Activated B cell treated with CpG ODN at 0.5 μM for 24 hours (primary cell): ENCODE measurements at regions of chr12 and their contacts with region 1.

Region 1: DNA sequence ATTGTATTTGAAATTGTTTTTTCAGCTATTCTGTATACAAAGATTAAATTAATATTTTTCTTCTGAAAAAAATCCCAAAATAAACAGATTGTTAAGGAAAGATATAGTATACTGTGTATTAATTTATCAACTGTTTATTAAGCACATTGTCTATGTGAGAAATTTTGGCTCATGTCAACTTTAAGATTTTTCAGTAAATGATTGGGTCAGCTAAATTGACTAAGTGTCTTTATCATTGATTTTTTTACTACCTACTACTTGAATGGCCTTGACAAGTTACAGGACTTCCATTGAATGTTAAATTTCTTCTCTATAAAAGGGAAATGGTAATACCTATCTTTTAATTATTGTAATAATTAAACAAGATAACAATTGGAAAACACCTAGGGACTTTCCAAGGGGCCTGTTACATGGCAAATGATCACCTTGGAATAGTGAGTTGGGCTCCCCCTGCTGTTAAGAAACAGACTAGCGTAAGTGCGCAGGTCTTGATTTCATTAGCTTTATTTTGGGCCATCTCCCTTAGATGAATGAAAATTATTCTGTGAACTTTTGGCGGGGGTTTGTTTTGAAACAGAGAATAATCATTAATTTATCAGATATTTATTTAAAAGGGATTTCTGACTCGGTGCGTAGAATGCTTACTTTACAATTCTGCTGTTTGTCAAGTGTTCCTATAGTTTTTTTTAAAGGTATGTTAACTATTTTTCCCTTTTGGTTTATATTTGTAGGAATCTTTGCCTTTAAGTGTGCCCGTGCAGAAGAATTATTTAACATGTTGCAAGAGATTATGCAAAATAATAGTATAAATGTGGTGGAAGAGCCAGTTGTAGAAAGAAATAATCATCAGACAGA is 14.5 kb upstream of the CCT2 start:
- DNase-seq: no peak
- ATAC-seq: peak; percentile 82
- H3K4me3 Mint-ChIP-seq: no peak overlapping the region
- H3K27ac Mint-ChIP-seq: no peak overlapping the region
- H3K4me1 Mint-ChIP-seq: no peaks in the 10 kb centered on the region
- H3K27me3 Mint-ChIP-seq: no peaks in the 10 kb centered on the region
- CTCF ChIP-seq: peak; percentile 88

Region 2: DNA sequence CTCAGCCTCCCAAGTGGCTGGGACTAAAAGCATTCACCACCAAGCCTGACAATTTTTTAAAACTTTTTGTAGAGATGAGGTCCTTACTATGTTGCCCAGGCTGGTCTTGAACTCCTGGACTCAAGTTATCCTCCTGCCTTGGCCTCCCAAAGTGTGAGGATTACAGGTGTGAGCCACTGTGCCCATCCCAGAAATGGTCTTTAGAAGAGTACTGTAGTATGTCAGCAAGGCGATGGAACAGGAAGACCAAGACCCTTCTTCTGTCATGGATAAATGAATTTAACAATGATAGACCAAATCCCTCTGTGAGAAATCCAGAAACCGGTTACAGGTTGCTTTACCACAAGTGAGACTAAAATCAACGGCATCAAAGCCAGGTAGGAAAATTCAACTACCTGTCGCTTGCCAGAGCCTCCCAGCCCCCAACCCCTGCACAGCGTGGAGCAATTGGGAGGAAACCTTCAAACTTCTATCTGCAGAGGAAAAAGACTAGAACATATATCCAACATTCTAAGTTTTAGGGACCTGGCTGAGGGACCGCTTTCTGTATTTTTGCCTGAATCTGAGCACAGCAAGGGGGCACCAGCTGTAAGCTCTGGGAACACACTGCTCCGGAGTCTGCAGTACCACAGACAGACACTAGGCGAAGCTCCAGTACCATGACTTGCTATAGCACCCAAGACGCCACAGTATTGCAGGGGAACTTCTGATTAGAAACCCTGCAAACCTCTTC is 280.1 kb before region 1 on chr12:
- CTCF ChIA-PET with region 1: interaction called, 34 read pairs
- POLR2A ChIA-PET with region 1: interaction called, 3 read pairs
- intact Hi-C with region 1: loop called (anchors 1 kb)
- DNase-seq: peak; percentile 56
- ATAC-seq: peak; percentile 100
- H3K4me3 Mint-ChIP-seq: no peak overlapping the region
- H3K27ac Mint-ChIP-seq: no peak overlapping the region
- H3K4me1 Mint-ChIP-seq: peaks cover 2% of the 10 kb centered on the region
- H3K27me3 Mint-ChIP-seq: peaks cover 45% of the 10 kb centered on the region
- CTCF ChIP-seq: peak; percentile 99

Region 3: DNA sequence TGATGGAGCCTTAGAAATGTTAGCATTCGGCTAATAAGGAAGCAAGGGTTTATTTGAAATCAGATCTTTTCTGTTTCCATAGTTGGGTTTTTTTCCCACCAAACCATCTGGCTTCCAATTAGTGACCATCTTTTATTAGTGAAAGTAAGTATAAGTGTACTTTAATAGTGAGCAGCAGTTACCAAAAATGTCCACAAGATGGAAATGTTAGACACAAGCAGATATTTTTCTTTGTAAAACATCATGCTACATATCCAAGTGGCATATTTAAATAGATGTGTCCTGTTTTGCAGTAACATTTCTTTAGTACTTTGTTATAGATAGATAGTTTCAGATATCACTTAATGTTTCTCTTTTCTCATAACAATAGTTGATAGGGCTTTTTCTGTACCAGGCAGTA is 182.4 kb before region 1 on chr12:
- CTCF ChIA-PET with region 1: interaction called, 31 read pairs
- POLR2A ChIA-PET with region 1: no interaction called
- intact Hi-C with region 1: loop called (anchors 1 kb)
- DNase-seq: no peak
- ATAC-seq: no peak
- H3K4me3 Mint-ChIP-seq: no peak overlapping the region
- H3K27ac Mint-ChIP-seq: no peak overlapping the region
- H3K4me1 Mint-ChIP-seq: no peaks in the 10 kb centered on the region
- H3K27me3 Mint-ChIP-seq: no peaks in the 10 kb centered on the region
- CTCF ChIP-seq: no peak

Region 4: DNA sequence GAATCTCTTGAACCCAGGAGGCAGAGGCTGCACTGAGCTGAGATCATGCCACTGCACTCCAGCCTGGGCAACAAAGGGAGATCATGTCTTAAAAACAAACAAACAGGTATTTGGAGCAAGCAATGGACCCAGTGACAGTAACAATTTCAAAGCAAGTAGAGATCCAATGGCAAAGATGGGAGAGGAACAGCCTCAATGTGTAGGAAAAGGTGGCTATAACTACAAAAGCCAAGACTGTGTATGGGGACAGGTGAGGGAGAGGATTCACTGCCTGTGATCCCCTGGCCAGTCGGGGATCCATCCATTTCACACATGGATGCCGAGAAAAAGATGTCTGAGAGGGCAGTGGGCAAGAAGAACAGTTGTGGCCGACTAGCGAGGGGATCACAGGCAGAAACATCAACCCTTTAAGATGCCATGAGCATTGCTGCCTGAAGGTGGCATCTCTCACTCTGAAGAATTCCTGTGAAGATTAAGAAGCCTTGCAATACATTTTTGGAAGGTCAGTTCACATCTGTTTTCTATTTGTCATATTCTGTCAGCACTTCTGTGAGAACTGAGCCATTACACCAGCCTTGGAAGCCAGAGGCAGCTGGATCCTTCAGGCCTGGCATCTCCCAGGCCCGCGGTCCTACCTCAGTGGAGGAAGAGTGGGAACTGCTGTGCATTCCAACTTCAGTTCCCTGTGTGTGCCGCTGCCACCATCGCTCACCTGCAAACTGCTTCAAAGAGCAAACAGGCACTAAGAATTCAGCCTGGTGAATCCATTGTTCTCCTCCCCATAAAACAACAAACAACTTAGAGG is 155.1 kb before region 1 on chr12:
- CTCF ChIA-PET with region 1: interaction called, 9 read pairs
- POLR2A ChIA-PET with region 1: no interaction called
- intact Hi-C with region 1: loop called (anchors 1 kb)
- DNase-seq: no peak
- ATAC-seq: no peak
- H3K4me3 Mint-ChIP-seq: no peak overlapping the region
- H3K27ac Mint-ChIP-seq: no peak overlapping the region
- H3K4me1 Mint-ChIP-seq: no peaks in the 10 kb centered on the region
- H3K27me3 Mint-ChIP-seq: no peaks in the 10 kb centered on the region
- CTCF ChIP-seq: no peak

Region 5: DNA sequence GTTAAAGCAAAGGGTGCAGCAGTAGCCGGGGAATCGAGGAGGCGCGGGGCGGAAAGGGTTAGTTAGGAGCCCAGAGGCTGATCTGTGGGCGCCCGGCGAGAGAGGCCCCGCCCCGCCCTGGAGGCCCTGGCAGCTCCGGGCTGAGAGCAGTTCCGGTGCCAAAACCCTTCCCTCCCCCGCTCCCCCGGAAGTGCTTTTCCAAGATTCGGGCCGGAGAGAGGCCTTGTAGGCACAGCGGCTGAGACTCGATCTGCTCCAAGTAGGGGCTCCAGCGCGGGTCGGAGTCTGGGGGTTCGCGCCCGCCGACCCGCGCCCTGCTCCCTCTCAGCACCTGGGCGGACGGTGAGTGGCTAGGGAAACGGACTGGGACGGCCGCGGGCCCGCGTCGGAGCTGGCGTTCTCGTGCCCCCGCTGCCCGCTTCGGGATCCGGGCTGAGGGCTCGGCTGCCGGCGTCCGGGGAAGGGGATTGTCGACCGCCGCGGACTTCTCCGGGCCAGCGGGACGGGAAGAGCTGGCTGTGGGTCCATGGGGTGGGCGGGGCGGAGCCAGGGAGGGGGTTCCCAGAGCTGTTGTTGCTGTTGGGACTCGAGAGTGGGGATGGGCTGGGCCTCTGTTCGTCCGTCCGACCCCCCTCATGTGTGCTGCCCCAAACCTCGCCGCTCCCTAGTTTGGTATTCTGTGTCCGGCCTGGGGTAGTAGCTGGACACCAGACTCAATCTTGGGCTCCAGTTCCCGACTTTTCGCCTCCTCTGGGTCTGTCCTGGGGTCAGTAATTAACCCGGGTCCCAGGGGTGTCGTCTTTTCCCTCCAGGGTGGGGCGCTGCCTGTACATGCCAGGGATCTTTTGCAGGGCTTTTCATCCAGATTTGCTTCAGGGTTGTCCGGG is 100.3 kb before region 1 on chr12 and contains the start of gene FRS2:
- CTCF ChIA-PET with region 1: interaction called, 6 read pairs
- POLR2A ChIA-PET with region 1: interaction called, 3 read pairs
- intact Hi-C with region 1: loop called (anchors 2 kb)
- DNase-seq: peak; percentile 77
- ATAC-seq: peak; percentile 98
- H3K4me3 Mint-ChIP-seq: peak within 1 kb of the TSS; percentile 99
- H3K27ac Mint-ChIP-seq: peak within 1 kb of the TSS; percentile 95
- H3K4me1 Mint-ChIP-seq: peaks cover 77% of the 10 kb centered on the region
- H3K27me3 Mint-ChIP-seq: no peaks in the 10 kb centered on the region
- CTCF ChIP-seq: no peak
- total RNA-seq, gene FRS2: 23.2 and 23.8 TPM in 2 replicates

Region 6: GRCh38 chr12:69585189-69586062 is 14.7 kb after region 1 on chr12 and contains the start of gene CCT2:
- CTCF ChIA-PET with region 1: interaction called, 11 read pairs
- POLR2A ChIA-PET with region 1: no interaction called
- intact Hi-C with region 1: loop called (anchors 1 kb)
- DNase-seq: peak; percentile 91
- ATAC-seq: peak; percentile 90
- H3K4me3 Mint-ChIP-seq: peak within 1 kb of the TSS; percentile 96
- H3K27ac Mint-ChIP-seq: peak within 1 kb of the TSS; percentile 95
- H3K4me1 Mint-ChIP-seq: peaks cover 8% of the 10 kb centered on the region
- H3K27me3 Mint-ChIP-seq: no peaks in the 10 kb centered on the region
- CTCF ChIP-seq: no peak
- total RNA-seq, gene CCT2: 205 and 211 TPM in 2 replicates